Activated CD4-positive, alpha-beta memory T cell treated with anti-CD3 and anti-CD28 coated beads for 36 hours (primary cell): ENCODE measurements at regions of chr2 and their contacts with region 1.

Region 1: DNA sequence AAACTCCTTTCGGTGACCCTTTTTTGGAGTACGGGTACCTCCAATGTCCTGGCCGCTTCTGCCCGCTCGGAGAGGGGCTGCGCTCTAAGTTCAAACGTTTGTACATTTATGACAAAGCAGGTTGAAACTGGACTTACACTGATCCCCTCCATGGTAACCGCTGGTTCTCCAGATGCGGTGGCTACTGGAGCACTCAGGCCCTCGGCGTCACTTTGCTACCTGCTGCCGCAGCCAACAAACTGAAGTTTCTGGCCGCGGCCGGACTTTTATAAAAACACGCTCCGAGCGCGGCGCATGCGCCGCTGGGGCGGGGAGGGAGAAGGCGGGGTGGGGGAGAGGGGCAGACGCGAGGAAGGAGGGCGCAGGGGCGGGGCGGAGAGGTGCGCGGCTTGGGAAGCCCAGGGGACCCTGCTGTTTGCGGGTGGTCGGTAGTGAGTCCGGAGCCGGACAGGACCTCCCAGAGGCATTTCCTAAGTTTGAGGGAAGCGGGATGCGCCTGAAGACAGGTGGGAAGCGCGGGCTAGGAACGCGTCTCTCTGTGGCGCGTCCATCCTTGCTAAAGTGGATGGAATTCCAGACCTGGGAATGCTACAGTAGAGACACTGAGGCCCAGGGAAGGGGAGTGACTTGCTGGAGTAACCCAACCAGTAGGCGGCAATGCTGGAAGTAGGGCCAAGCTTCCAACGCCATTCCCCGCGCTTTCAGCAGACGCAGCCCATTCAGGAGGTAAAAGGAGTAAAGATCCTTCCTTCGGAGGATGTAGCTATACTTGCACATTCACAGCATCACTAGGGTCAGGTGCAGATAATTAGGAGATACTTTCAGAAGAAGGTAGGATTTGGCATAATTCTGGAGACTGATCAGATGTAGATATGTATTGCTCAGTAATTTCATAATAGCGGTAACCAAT is at the start of gene CXCR4:
- DNase-seq: peak; percentile 93
- H3K4me3 Mint-ChIP-seq: peak within 1 kb of the TSS; percentile 98
- H3K27ac Mint-ChIP-seq: peak within 1 kb of the TSS; percentile 98
- H3K4me1 Mint-ChIP-seq: peaks cover 54% of the 10 kb centered on the region
- H3K27me3 Mint-ChIP-seq: peaks cover 2% of the 10 kb centered on the region
- total RNA-seq, gene CXCR4: 139 to 141 TPM

Region 2: DNA sequence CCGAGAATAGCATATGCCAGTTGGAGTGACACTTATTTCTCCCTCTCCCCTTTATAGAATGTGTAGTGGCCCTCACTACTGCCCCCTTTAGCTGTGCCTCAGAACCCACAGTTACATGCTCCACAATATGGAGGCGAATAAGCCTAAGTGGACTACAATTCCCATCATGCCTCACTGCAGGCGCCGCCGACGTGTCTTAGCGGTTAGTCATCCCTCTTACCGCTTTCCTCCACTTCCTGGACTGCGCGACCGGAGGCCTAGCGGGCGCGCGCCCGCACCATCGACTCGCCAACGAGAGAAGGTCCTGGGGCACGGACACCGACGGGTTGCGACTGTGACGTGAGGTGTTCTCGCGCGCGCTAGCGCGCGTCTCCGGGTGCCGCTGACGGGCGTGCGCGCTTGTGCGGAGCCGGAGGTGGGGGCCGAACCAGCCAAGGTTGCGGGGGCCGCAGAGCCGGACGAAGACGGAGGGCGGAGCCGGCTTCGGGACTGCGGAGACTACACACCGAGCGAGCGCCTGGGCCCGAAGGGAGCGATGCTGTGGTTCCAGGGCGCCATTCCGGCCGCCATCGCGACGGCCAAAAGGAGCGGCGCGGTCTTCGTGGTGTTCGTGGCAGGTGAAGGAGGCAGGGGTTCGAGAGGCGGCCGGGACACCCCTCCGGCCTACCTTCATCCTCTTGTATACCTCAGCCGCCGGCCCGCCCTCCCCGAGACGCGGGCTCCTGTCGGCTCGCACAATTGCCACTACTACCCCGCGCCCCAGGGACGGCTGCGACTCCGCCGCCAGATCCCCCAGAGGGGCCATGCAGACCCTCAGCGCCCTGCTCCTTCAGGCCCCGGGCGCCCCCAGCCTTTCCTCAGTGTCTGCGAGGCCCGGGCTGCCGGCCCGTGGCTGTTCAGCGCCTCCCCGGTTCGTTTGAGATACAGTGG is 376.5 kb before region 1 on chr2 and contains the start of gene UBXN4:
- CTCF ChIA-PET with region 1: no interaction called
- POLR2A ChIA-PET with region 1: no interaction called
- intact Hi-C with region 1: loop called (anchors 5 kb)
- DNase-seq: peak; percentile 98
- H3K4me3 Mint-ChIP-seq: peak within 1 kb of the TSS; percentile 96
- H3K27ac Mint-ChIP-seq: peak within 1 kb of the TSS; percentile 99
- H3K4me1 Mint-ChIP-seq: peaks cover 24% of the 10 kb centered on the region
- H3K27me3 Mint-ChIP-seq: no peaks in the 10 kb centered on the region
- total RNA-seq, gene UBXN4: 107 TPM

Region 3: DNA sequence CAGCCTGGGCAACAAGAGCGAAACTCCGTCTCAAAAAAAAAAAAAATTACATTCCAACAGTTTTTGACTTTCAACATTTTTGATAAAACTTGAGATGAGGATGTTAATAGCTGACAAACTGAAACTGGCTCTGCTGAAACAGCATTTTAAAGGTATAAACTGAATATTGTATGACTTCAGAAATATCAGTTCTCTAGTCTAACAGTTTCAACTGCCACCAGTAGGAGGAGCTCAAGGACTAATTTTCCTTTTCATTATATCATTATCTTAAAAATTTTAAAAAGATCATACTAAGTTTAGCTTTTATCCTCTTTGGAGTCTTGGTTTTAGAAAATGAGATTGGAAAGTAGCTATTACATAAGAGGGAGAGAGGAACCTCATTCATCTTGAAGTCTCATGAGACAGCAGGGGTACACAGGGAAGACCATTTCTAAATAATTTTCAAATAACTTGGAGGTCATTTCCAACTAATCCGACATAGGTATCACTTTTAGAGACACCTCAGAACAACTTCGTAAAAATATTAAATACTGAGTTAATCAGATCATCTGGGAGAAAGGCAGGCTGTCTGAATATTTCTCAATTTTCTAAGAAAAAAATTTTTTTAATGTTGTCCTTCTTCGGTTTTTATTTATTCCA is 204.3 kb before region 1 on chr2:
- CTCF ChIA-PET with region 1: interaction called, 7 read pairs
- POLR2A ChIA-PET with region 1: interaction called, 3 read pairs
- intact Hi-C with region 1: loop called (anchors 1 kb)
- DNase-seq: no peak
- H3K4me3 Mint-ChIP-seq: no peak overlapping the region
- H3K27ac Mint-ChIP-seq: no peak overlapping the region
- H3K4me1 Mint-ChIP-seq: peaks cover 14% of the 10 kb centered on the region
- H3K27me3 Mint-ChIP-seq: no peaks in the 10 kb centered on the region

Region 4: DNA sequence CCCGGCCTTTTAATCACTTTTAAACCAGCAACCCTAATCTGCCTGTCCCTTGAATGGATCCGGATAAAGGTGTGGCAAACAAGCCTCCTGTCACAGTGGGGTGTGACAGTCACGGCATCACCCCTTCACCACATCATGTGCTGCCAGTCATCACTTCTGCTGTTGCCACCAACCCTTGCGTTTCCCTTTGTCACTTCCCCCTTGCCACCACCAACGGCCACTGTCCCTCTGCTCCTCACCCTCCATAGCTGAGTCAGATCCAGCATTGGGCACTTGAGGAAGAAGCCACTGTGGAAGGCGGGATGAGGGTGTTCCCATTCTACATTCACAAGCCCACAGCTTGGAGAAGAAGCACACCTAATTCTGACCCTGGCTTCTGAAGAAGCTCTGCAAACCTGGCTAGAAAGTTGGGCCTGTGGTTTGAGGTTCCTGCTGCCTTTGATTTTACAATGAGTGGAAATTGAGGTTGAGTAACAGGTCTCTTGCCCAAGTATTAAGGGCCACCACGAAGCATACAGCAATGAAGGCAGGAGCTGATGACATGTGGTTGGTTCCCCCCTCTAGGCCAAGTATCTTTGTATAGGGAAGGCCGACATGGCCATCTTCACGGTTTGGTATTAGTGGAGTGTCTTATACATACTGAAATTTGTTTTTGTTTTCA is 109.8 kb before region 1 on chr2:
- CTCF ChIA-PET with region 1: no interaction called
- POLR2A ChIA-PET with region 1: no interaction called
- intact Hi-C with region 1: loop called (anchors 2 kb)
- DNase-seq: peak; percentile 87
- H3K4me3 Mint-ChIP-seq: no peak overlapping the region
- H3K27ac Mint-ChIP-seq: peak overlapping the region; percentile 72
- H3K4me1 Mint-ChIP-seq: peaks cover 49% of the 10 kb centered on the region
- H3K27me3 Mint-ChIP-seq: no peaks in the 10 kb centered on the region

Region 5: DNA sequence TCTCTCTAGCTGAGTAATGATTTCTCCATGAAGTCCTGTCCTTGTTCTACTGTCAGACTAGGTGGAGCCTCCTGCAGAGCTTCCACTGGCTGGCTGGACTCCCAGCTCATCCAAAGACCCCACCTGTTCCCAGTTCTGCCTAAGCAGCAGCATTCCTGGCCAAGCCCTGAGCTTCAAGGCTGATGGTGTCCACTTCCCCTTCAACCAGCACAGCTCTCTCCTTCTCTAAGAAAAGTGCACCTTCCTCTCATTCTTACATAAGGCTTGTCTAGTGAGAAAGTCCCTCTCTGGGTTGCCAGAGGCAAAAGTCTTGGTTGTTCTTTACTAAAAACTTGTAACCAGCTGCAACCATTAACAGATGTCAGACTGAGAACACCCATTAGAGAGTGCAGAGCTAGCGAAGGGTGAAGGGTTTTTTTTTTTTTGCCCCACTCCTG is 59.1 kb before region 1 on chr2:
- CTCF ChIA-PET with region 1: no interaction called
- POLR2A ChIA-PET with region 1: interaction called, 11 read pairs
- intact Hi-C with region 1: loop called (anchors 1 kb)
- DNase-seq: no peak
- H3K4me3 Mint-ChIP-seq: no peak overlapping the region
- H3K27ac Mint-ChIP-seq: no peak overlapping the region
- H3K4me1 Mint-ChIP-seq: peaks cover 63% of the 10 kb centered on the region
- H3K27me3 Mint-ChIP-seq: no peaks in the 10 kb centered on the region

Region 6: GRCh38 chr2:136212423-136213378 is 94.5 kb after region 1 on chr2:
- CTCF ChIA-PET with region 1: no interaction called
- POLR2A ChIA-PET with region 1: no interaction called
- intact Hi-C with region 1: loop called (anchors 5 kb)
- DNase-seq: peak; percentile 61
- H3K4me3 Mint-ChIP-seq: no peak overlapping the region
- H3K27ac Mint-ChIP-seq: peak overlapping the region; percentile 59
- H3K4me1 Mint-ChIP-seq: peaks cover 46% of the 10 kb centered on the region
- H3K27me3 Mint-ChIP-seq: no peaks in the 10 kb centered on the region

Region 7: DNA sequence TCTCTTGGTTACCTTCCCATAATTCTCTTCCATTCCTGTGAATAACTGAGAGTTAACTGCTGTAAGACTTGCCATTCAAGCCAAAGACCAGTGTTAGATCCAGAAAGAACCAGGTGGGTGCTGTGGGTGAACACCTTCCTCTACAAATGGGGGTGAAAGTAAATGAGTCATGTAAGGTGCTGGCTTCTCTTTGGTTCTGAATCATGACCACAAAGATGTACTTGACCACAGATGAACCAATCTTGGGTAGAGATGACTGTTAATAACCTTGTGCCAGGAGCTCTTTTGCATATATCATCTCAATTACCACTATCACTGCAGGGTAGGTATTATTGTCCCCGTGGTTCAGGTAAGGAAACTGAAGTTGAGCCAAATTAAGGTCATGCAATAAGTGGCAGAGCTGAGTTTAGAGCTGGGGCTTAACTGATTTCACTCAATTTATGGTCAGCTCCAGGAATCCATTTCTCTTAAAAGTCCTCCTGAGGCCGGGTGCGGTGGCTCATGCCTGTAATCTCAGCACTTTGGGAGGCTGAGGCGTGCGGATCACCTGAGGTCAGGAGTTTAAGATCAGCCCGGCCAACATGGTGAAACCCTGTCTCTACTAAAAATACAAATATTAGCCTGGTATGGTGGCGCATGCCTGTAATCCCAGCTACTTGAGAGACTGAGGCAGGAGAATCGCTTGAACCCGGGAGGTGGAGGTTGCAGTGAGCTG is 244.7 kb after region 1 on chr2:
- CTCF ChIA-PET with region 1: no interaction called
- POLR2A ChIA-PET with region 1: interaction called, 3 read pairs
- intact Hi-C with region 1: loop called (anchors 1 kb)
- DNase-seq: peak; percentile 67
- H3K4me3 Mint-ChIP-seq: peak overlapping the region; percentile 25
- H3K27ac Mint-ChIP-seq: peak overlapping the region; percentile 53
- H3K4me1 Mint-ChIP-seq: peaks cover 56% of the 10 kb centered on the region
- H3K27me3 Mint-ChIP-seq: peaks cover 5% of the 10 kb centered on the region